ENCODE measurements at regions of chr12 and their contacts with region 1.

Region 1: DNA sequence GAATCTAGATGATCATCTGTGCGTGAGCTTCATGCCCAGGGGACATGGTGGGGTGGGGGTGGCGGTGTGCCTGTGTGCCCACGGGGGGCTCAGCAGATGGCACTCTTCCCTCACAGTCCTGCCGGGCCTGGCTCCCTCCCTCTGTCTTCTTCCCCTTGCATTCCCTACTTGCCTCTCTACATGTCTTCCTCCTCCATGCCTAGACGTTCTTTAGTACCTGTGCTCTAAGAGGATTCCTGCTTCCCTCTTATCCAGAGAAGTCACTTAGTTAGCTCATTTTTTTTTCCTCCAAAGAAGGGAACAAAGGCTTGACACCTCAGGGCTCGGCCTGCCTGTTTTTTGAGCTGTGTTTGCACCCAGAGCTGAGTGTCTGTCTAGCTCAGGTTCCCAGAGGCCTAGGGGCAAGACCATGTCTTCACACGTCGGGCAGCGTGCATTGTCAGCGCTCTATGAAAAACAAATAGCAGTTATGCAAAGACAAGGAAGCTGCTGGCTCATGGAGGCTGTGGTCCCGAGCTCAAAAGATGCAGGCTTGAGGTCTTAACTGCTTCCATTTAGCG is 48.8 kb downstream of the NINJ2 start:
- DNase-seq: peak; percentile 59
- H3K4me3 Mint-ChIP-seq: no peak overlapping the region
- H3K27ac Mint-ChIP-seq: no peak overlapping the region
- H3K4me1 Mint-ChIP-seq: peaks cover 18% of the 10 kb centered on the region
- H3K27me3 Mint-ChIP-seq: no peaks in the 10 kb centered on the region

Region 2: DNA sequence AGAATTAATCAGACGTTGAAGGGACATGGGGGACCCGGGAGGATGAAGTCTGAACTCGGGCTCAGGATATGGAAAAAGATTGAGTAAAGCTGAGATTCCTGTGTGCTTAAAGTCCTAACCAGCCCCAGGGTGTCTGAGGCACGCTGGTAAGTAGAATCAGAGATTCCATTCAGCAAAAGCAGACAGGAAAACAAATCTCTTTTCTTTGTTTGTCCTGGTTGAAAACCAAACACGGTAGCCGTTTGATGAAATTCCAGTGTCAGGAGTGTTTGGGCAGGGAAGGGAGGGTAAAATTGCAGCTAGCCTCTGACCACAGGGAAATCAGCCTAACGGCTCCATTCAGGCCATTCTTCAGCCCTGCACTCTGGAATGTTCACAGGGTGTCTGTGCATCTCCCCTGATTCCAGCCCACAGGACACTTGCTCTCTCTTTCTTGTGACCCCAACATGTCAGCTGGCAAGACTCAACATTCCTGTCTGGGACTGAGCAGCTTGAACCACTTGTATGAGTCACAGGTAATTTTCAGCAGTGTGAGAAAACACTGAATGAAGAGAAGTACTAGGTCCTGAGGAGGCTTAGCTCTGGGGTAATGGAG is 17.7 kb after region 1 on chr12:
- CTCF ChIA-PET with region 1: no interaction called
- POLR2A ChIA-PET with region 1: interaction called, 3 read pairs
- intact Hi-C with region 1: loop called (anchors 2 kb)
- DNase-seq: no peak
- H3K4me3 Mint-ChIP-seq: no peak overlapping the region
- H3K27ac Mint-ChIP-seq: no peak overlapping the region
- H3K4me1 Mint-ChIP-seq: peaks cover 23% of the 10 kb centered on the region
- H3K27me3 Mint-ChIP-seq: no peaks in the 10 kb centered on the region

Region 3: GRCh38 chr12:913919-914708 is 299.6 kb after region 1 on chr12:
- CTCF ChIA-PET with region 1: no interaction called
- POLR2A ChIA-PET with region 1: no interaction called
- intact Hi-C with region 1: no loop called
- DNase-seq: no peak
- H3K4me3 Mint-ChIP-seq: no peak overlapping the region
- H3K27ac Mint-ChIP-seq: peak overlapping the region; percentile 29
- H3K4me1 Mint-ChIP-seq: peaks cover 5% of the 10 kb centered on the region
- H3K27me3 Mint-ChIP-seq: no peaks in the 10 kb centered on the region

Measured in activated CD4-positive, alpha-beta memory T cell treated with anti-CD3 and anti-CD28 coated beads for 36 hours (primary cell).